HepG2 (cell line): ENCODE measurements at regions of chr5 and their contacts with region 1.

Region 1: DNA sequence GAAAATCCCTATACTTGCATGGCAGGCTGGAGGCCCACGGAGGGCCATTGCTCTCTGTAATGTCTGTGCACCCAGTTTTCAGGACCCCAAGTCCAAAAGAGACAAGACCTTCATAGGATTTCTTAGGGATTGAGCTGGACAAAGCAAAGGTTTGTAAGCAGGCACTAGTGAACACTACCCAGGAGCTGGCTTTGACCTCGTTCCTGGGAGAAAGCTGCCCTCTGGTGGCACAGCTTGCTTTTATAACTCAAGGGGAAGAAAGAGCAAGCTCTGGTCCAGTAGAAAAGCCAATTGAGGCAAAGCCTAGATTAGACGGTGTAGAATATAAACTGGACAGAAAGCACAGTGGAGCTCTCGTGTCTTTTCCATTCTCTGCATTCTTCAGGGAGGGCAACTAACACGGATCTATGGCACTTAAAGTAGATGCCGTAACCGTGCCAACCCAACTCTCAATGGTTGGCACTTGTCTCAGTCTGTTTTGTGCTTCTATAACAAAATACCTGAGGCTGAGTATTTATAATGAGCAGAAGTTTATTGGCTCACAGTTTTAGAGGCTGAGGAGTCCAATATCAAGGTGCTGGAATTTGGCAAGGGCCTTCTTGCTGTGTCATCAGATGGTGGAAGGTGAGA is 7.9 kb downstream of the GABRP start:
- DNase-seq: peak; percentile 27
- ATAC-seq: peak; percentile 88
- H3K4me3 ChIP-seq: no peak overlapping the region
- H3K27ac ChIP-seq: no peak overlapping the region
- H3K4me1 ChIP-seq: no peaks in the 10 kb centered on the region
- H3K27me3 ChIP-seq: peaks cover 0 to 2% of the 10 kb centered on the region in 2 experiments; a peak in 2 of 5 replicates
- CTCF ChIP-seq: peak; percentile 63
- EP300 ChIP-seq: no peak
- POLR2A ChIP-seq: no peak
- RAD21 ChIP-seq: no peak

Region 2: DNA sequence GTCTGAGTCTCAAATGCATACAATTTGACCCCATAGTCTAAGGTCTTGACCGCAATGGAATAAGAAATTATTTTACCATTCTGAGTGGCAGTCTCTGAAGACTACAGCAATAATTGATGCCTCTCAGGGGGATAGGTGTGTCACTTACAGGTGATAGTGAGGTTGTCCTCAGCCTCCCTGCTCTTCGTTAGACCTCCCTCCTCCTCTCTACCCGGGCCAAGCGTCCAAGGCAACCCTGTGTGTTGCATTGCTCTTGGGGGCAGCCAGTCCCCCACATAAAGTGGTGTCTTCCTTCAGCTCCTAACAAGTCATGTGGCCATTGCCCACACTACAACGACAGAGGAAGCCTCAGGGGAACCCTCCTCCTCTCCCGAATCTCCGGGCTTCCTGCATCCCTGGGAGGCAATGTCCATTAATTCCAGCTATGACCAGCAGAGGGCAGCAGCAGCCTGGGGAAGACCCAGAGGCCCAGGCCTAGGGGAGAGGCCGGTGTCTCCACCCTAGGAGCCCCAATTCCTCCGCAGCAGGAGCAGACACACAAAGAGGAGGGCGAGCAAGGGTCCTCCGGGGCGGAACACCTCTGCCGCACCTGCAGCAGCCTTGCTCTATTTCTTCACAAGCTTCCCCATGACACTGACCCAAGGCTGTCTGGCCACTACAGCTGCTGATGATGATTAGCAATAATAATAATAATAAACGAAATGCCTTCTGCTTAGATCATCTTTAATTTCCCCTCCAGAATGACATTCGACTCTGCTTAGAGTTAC is 152.8 kb before region 1 on chr5:
- CTCF ChIA-PET with region 1: interaction called, 10 read pairs
- POLR2A ChIA-PET with region 1: no interaction called
- in situ Hi-C with region 1: no loop called
- intact Hi-C with region 1: loop called (anchors 1 kb)
- DNase-seq: peak; percentile 15
- ATAC-seq: peak; percentile 91
- H3K4me3 ChIP-seq: no peak overlapping the region
- H3K27ac ChIP-seq: no peak overlapping the region
- H3K4me1 ChIP-seq: peaks cover 7% of the 10 kb centered on the region; the same call in 1 of the 2 replicates
- H3K27me3 ChIP-seq: peaks cover 2 to 24% of the 10 kb centered on the region in 2 experiments; a peak in 2 of 5 replicates
- CTCF ChIP-seq: peak; percentile 84
- EP300 ChIP-seq: no peak
- POLR2A ChIP-seq: no peak
- RAD21 ChIP-seq: no peak

Region 3: GRCh38 chr5:170740551-170741205 is 50.8 kb before region 1 on chr5:
- CTCF ChIA-PET with region 1: interaction called, 22 read pairs
- POLR2A ChIA-PET with region 1: interaction called, 3 read pairs
- in situ Hi-C with region 1: loop called (anchors 5 kb)
- intact Hi-C with region 1: loop called (anchors 1 kb)
- DNase-seq: no peak
- ATAC-seq: no peak
- H3K4me3 ChIP-seq: no peak overlapping the region
- H3K27ac ChIP-seq: no peak overlapping the region
- H3K4me1 ChIP-seq: no peaks in the 10 kb centered on the region
- H3K27me3 ChIP-seq: peaks cover 2 to 18% of the 10 kb centered on the region in 2 experiments; a peak in 3 of 5 replicates
- CTCF ChIP-seq: no peak
- EP300 ChIP-seq: no peak
- POLR2A ChIP-seq: no peak
- RAD21 ChIP-seq: no peak

Region 4: DNA sequence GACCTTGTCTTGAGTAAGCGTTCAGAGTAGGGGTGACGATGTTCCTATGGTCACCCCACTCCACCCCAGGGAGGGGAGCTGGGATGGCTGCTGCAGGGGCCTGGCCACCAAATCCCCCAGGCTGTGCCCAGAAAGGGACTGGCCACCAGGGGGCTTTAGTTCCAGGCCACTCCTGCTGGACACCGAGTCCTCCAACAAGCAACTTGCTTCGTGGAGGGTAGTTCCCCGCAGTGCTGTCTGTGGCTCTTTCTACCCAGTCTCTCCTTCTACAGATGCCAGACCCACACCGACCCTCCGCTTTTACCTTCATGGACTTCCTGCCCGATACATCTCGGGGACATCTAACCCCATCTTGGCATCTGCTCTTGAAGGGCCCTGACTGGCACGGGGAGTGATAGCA is 43.6 kb before region 1 on chr5:
- CTCF ChIA-PET with region 1: interaction called, 22 read pairs
- POLR2A ChIA-PET with region 1: interaction called, 3 read pairs
- in situ Hi-C with region 1: loop called (anchors 5 kb)
- intact Hi-C with region 1: loop called (anchors 1 kb)
- DNase-seq: peak; percentile 15
- ATAC-seq: peak; percentile 80
- H3K4me3 ChIP-seq: no peak overlapping the region
- H3K27ac ChIP-seq: no peak overlapping the region
- H3K4me1 ChIP-seq: no peaks in the 10 kb centered on the region
- H3K27me3 ChIP-seq: peaks cover 2 to 25% of the 10 kb centered on the region in 2 experiments; a peak in 3 of 5 replicates
- CTCF ChIP-seq: peak; percentile 49
- EP300 ChIP-seq: no peak
- POLR2A ChIP-seq: no peak
- RAD21 ChIP-seq: no peak

Region 5: GRCh38 chr5:170818232-170818631 is 26.8 kb after region 1 on chr5:
- CTCF ChIA-PET with region 1: no interaction called
- POLR2A ChIA-PET with region 1: no interaction called
- in situ Hi-C with region 1: no loop called
- intact Hi-C with region 1: no loop called
- DNase-seq: no peak
- ATAC-seq: no peak
- H3K4me3 ChIP-seq: no peak overlapping the region
- H3K27ac ChIP-seq: no peak overlapping the region
- H3K4me1 ChIP-seq: no peaks in the 10 kb centered on the region
- H3K27me3 ChIP-seq: no peaks in the 10 kb centered on the region
- CTCF ChIP-seq: no peak
- EP300 ChIP-seq: no peak
- POLR2A ChIP-seq: no peak
- RAD21 ChIP-seq: no peak

Region 6: GRCh38 chr5:171010816-171011215 is 219.4 kb after region 1 on chr5:
- CTCF ChIA-PET with region 1: no interaction called
- POLR2A ChIA-PET with region 1: no interaction called
- in situ Hi-C with region 1: no loop called
- intact Hi-C with region 1: no loop called
- DNase-seq: no peak
- ATAC-seq: no peak
- H3K4me3 ChIP-seq: no peak overlapping the region
- H3K27ac ChIP-seq: no peak overlapping the region
- H3K4me1 ChIP-seq: no peaks in the 10 kb centered on the region
- H3K27me3 ChIP-seq: no peaks in the 10 kb centered on the region
- CTCF ChIP-seq: no peak
- EP300 ChIP-seq: no peak
- POLR2A ChIP-seq: no peak
- RAD21 ChIP-seq: no peak

Region 7: DNA sequence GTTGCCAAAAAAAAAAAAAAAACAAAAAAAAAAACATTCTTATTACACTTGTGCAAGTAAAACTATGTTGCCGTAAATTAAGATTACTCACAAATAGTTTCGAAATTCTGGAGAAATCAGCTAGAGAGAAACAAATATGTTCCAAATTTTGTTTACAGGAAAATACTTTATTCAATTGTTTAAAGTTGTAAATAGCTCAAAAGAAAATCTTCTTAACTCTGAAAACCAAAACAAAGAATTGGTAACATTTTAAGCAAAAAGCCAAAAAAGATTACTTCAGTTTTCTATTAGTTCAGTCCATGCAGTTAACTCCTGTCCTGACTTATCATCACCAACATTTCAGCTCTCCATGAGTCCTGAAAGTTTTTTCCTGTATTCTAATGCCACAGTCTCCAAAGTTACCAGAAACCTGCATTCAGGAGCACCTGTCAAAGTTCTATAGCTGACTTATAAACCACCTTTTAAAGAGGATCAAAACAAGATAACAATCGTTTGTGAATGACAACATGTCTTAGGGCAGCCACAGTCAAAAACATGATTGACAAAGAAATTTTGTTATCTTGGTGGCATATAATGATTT is 264.5 kb after region 1 on chr5:
- CTCF ChIA-PET with region 1: no interaction called
- POLR2A ChIA-PET with region 1: no interaction called
- in situ Hi-C with region 1: no loop called
- intact Hi-C with region 1: no loop called
- DNase-seq: no peak
- ATAC-seq: no peak
- H3K4me3 ChIP-seq: no peak overlapping the region
- H3K27ac ChIP-seq: no peak overlapping the region
- H3K4me1 ChIP-seq: no peaks in the 10 kb centered on the region
- H3K27me3 ChIP-seq: no peaks in the 10 kb centered on the region
- CTCF ChIP-seq: no peak
- EP300 ChIP-seq: no peak
- POLR2A ChIP-seq: no peak
- RAD21 ChIP-seq: no peak